ENCODE measurements at regions of chr10 and their contacts with region 1.

Region 1: DNA sequence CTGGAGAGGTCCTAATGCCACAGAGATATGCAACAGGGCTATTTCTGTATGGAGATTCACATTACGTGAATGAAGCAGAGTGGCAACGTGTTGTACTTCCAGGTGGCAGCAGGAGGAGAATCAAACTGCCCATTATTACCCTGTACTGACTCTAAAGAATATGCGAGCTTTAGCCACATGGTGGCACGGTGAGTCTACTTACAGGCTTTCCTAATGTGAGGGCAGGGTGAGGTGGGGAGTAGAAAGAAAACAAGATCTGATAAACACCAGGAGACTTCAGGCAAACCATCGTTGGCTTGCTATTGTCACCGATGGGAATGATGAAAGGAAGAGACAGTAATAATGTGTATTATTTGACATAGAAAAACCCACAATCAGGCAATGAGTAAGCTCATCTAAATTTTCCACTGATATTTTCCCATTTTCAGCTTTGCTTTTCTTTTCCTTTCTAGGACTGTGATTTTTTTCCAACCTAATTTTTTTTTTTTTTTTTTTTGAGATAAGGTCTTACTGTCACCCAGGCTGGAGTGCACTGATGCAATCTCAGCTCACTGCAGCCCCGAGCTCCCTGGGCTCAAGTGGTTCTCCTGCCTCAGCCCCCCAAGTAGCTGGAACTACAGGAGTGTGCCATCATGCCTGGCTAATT is 164.3 kb downstream of the BTAF1 start:
- DNase-seq: peak; percentile 7 to 69 (median 34)
- ATAC-seq: peak; percentile 91
- H3K4me3 ChIP-seq: no peak overlapping the region
- H3K4me3 Mint-ChIP-seq: no peak overlapping the region
- H3K27ac ChIP-seq: no peak overlapping the region
- H3K27ac Mint-ChIP-seq: no peak overlapping the region
- H3K4me1 ChIP-seq: no peaks in the 10 kb centered on the region
- H3K4me1 Mint-ChIP-seq: no peaks in the 10 kb centered on the region
- H3K27me3 ChIP-seq: no peaks in the 10 kb centered on the region
- H3K27me3 Mint-ChIP-seq: no peaks in the 10 kb centered on the region
- CTCF ChIP-seq: peak; percentile 61

Region 2: DNA sequence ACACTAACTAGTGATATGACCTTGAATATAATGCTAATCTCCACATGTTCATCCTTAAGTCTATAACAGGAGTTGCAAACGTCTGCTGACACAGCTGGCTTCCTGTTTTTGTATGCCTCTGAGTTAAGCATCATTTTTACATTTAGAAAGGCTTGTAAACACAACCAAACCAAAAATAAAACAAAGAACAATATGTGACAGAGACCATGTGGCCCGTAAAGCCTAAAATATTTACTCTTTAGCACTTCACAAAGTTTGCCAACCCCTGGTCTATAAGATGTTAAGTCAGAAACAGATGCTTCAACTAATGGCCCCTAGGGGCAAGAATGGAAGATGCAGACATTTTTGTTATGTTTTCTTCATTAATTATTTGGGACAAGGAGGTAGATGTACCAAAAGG is 93.7 kb after region 1 on chr10:
- CTCF ChIA-PET with region 1: no interaction called
- POLR2A ChIA-PET with region 1: no interaction called
- intact Hi-C with region 1: no loop called
- DNase-seq: peak in 2 of 14 experiments; percentile 0 to 1
- ATAC-seq: no peak
- H3K4me3 ChIP-seq: no peak overlapping the region
- H3K4me3 Mint-ChIP-seq: no peak overlapping the region
- H3K27ac ChIP-seq: no peak overlapping the region
- H3K27ac Mint-ChIP-seq: no peak overlapping the region
- H3K4me1 ChIP-seq: no peaks in the 10 kb centered on the region
- H3K4me1 Mint-ChIP-seq: no peaks in the 10 kb centered on the region
- H3K27me3 ChIP-seq: no peaks in the 10 kb centered on the region
- H3K27me3 Mint-ChIP-seq: no peaks in the 10 kb centered on the region
- CTCF ChIP-seq: no peak

Region 3: DNA sequence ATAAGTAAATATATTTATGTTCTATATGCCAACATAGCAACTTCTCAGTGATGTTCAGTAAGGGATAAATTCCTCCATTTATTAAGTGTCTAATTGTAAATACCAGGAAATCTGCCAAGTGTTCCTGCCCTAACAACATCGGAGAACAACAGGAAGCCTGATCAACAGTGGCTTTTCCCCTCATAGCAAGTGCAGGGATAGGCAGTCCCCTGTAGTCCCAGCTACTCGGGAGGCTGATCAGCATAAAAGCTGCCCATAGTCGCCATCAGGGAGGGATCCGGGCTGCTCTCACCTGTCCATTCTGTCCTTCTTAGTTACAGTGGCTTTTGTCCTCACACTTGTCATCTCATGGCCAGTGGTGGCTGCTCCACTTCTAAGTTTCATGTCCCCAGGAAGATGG is 344.7 kb after region 1 on chr10:
- CTCF ChIA-PET with region 1: interaction called, 7 read pairs
- POLR2A ChIA-PET with region 1: no interaction called
- intact Hi-C with region 1: loop called (anchors 1 kb)
- DNase-seq: no peak
- ATAC-seq: no peak
- H3K4me3 ChIP-seq: no peak overlapping the region
- H3K4me3 Mint-ChIP-seq: no peak overlapping the region
- H3K27ac ChIP-seq: no peak overlapping the region
- H3K27ac Mint-ChIP-seq: no peak overlapping the region
- H3K4me1 ChIP-seq: no peaks in the 10 kb centered on the region
- H3K4me1 Mint-ChIP-seq: no peaks in the 10 kb centered on the region
- H3K27me3 ChIP-seq: no peaks in the 10 kb centered on the region
- H3K27me3 Mint-ChIP-seq: no peaks in the 10 kb centered on the region
- CTCF ChIP-seq: no peak

Region 4: DNA sequence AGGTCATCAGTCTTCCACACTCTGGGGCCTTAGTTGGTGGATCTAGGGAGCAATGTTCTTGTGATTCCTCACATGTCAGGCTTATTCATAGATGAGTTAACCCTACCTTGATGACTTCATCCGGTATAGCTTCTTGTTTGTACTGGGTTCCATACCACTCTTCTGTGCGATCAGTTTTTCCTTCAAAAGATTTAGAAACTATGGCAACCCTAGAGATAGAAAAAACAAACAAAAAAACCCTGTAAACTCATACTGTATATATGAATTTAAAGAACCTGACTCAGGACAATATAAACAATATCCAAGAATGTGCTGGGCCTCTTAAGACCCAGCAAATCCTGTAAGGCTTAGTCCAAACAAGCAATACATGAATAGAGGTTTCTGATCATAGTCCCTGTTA is 402.5 kb after region 1 on chr10:
- CTCF ChIA-PET with region 1: no interaction called
- POLR2A ChIA-PET with region 1: no interaction called
- intact Hi-C with region 1: no loop called
- DNase-seq: no peak
- ATAC-seq: no peak
- H3K4me3 ChIP-seq: no peak overlapping the region
- H3K4me3 Mint-ChIP-seq: no peak overlapping the region
- H3K27ac ChIP-seq: no peak overlapping the region
- H3K27ac Mint-ChIP-seq: no peak overlapping the region
- H3K4me1 ChIP-seq: no peaks in the 10 kb centered on the region
- H3K4me1 Mint-ChIP-seq: no peaks in the 10 kb centered on the region
- H3K27me3 ChIP-seq: no peaks in the 10 kb centered on the region
- H3K27me3 Mint-ChIP-seq: no peaks in the 10 kb centered on the region
- CTCF ChIP-seq: no peak

Measured in CD4-positive, alpha-beta T cell (primary cell).